ENCODE measurements at regions of chr6 and their contacts with region 1.

Region 1: DNA sequence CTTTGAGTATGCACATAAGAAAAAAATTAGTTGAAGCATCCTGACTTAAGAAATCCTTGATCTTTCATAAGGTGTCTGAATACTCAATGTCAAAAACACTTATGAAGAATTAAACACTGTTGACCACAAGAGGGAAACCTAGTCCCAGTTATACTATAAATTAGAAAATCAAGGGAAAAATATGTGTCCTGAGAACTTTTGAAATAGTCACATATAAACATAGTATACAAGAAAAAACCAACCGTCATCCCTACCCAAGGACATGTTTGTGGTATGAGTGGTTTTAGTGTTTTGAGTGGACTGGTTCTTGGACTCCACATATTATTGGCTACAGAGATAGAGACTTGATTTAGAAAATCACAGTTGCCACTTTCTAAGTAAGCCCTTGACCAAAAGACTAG is 7.6 kb upstream of the HLA-DRA start:
- DNase-seq: peak; percentile 38
- H3K4me3 ChIP-seq: no peak overlapping the region
- H3K27ac ChIP-seq: no peak overlapping the region
- H3K4me1 ChIP-seq: no peaks in the 10 kb centered on the region
- H3K27me3 ChIP-seq: peaks cover 16% of the 10 kb centered on the region
- CTCF ChIP-seq: peak; percentile 57; the same call in 1 of the 2 replicates

Region 2: DNA sequence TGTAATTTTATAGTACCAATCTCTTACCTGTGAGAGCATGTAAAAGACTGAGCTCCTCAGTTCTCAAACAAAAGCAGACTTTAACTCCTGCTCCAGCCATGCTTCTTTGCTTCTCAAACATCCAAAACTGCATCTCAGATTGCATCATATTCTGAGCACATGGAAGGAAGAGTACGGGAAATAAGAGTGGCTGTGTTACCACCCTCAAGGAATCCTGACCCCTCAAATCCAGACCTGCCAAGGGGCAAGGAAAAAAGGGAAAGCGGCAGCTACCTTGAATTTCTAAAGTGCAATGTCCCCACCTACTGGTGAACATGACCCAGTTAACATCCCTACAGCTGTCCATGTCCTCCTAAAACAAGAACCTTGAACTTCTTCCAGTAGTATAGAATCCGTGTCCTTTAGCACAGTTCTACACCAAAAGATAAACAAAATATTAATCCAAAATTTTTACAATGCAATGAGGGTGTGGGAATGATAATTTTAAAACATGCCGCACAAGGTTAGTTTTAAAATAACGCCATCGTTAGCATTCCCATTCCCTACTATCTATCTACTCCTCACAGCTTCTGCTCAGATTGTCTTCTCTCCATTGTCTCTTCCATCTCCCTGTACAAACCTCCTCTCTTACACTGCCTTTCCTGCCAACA is 268.5 kb after region 1 on chr6:
- CTCF ChIA-PET with region 1: no interaction called
- POLR2A ChIA-PET with region 1: no interaction called
- intact Hi-C with region 1: loop called (anchors 5 kb)
- DNase-seq: peak; percentile 69
- H3K4me3 ChIP-seq: no peak overlapping the region
- H3K27ac ChIP-seq: no peak overlapping the region
- H3K4me1 ChIP-seq: no peaks in the 10 kb centered on the region
- H3K27me3 ChIP-seq: peaks cover 43% of the 10 kb centered on the region
- CTCF ChIP-seq: peak; percentile 69